Activated CD4-positive, alpha-beta memory T cell treated with anti-CD3 and anti-CD28 coated beads, Interleukin-2, amount 10 ng/mL, durations not matched to agents 7 days and 5 days (primary cell): ENCODE measurements at regions of chr20 and their contacts with region 1.

Region 1: DNA sequence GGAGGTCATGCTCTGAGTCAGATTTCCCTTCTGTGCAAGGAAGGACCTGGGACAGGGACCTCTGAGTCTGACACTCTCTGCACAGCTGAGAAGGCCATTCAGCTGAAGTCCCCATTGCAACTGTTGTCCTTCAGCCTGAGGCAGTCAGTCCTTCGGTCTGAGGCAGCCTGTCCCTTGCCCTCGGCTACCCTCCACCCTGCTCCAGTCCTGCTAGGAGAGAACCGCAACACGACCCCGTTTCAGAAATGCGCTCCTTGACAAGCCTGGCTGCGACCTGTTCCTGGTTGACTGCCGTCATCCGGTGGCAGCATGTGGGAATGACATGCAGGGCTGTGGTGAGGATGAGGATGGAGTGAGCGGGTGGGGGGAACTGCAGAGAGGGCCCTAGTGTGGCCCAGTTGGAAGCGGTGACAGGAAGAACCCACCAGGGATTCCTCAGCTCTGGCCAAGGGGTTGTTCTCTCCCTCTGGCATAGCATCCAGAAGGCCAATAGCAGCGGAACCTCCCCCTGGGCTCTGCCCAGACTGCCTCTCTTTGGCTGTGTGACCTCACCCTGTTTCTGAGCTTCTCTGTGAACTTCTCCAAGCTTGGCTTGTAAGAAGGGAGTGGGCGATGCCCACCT is 40.3 kb upstream of the ANGPT4 start:
- DNase-seq: peak; percentile 74
- H3K4me3 Mint-ChIP-seq: no peak overlapping the region
- H3K27ac Mint-ChIP-seq: no peak overlapping the region
- H3K4me1 Mint-ChIP-seq: no peaks in the 10 kb centered on the region
- H3K27me3 Mint-ChIP-seq: peaks cover 28% of the 10 kb centered on the region

Region 2: GRCh38 chr20:699811-700338 is 256.6 kb before region 1 on chr20:
- CTCF ChIA-PET with region 1: no interaction called
- POLR2A ChIA-PET with region 1: no interaction called
- DNase-seq: no peak
- H3K4me3 Mint-ChIP-seq: no peak overlapping the region
- H3K27ac Mint-ChIP-seq: no peak overlapping the region
- H3K4me1 Mint-ChIP-seq: no peaks in the 10 kb centered on the region
- H3K27me3 Mint-ChIP-seq: no peaks in the 10 kb centered on the region

Region 3: DNA sequence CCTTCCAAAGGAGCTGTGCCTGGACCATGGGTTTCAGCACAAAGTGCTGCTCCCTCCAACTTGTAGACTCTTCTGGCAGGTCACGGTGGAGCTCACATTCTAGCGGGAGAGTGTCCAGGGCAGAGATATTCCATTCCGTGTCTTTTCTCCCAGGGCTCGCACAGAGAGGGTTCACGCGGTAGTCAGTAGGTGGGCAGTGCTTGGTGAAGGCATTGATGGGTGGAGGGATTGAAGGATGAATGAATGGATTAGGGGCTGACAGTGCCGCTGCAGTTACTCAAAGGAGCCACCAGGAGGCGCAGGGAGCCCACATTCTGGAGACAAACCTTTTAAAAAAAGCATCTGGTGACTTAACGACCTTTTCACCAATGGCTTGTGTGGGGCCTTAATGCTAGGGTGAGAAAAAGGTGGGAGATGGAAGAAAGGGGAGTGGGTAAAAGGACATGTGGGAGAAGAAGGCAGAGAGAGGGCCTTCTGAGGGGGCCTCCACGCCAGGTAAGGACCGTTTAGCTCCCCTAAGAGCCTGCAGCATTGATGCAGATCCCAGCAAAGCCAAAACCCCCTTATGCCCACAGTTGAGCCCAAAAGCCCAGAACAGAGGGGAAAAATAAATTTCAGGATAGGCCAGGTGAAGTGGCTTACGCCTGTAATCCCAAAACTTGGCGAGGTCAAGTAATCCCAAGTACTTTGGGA is 140.4 kb before region 1 on chr20:
- CTCF ChIA-PET with region 1: interaction called, 170 read pairs
- POLR2A ChIA-PET with region 1: no interaction called
- DNase-seq: peak; percentile 73
- H3K4me3 Mint-ChIP-seq: no peak overlapping the region
- H3K27ac Mint-ChIP-seq: no peak overlapping the region
- H3K4me1 Mint-ChIP-seq: no peaks in the 10 kb centered on the region
- H3K27me3 Mint-ChIP-seq: peaks cover 21% of the 10 kb centered on the region